Activated CD8-positive, alpha-beta memory T cell treated with anti-CD3 and anti-CD28 coated beads, Interleukin-2, amount 10 ng/mL, durations not matched to agents 7 days and 5 days (primary cell): ENCODE measurements at regions of chr18 and their contacts with region 1.

Region 1: GRCh38 chr18:12883684-12884405 is at the start of gene PTPN2:
- DNase-seq: peak; percentile 96
- ATAC-seq: peak; percentile 90
- H3K4me3 Mint-ChIP-seq: peak within 1 kb of the TSS; percentile 94
- H3K27ac Mint-ChIP-seq: peak within 1 kb of the TSS; percentile 92
- H3K4me1 Mint-ChIP-seq: peaks cover 51% of the 10 kb centered on the region
- H3K27me3 Mint-ChIP-seq: no peaks in the 10 kb centered on the region
- total RNA-seq, gene PTPN2: 65.4 to 82.7 TPM

Region 2: DNA sequence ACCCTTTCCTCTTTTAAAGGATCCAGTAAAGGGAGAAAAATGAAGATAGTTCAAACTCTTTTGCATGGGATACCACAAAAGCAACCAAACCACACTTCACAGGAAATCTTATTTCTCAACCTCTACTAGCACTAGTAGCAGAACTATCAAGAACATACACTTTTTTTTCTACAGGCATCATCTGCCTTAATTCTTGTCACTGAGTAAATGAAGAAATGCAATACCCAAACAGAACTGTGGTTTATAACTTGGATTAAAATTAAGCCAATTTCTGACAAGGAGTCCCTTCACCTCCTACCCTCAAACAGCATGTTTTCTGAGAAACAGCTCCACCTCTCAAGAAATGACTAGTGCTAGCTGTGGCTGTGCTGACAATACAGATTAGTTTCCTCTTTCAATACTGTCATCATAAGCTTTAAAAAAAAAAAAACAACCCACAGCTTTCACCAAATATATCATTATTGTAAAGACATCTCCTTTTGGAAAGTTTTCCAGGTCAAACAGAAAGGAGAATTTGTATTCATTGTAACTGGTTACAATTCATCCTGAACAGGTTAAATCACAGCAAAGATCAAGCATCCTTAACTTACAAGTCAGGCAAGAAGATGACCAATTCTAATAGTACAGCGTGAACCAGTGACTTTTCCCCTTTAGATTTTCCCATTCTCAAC is 44.2 kb before region 1 on chr18:
- CTCF ChIA-PET with region 1: interaction called, 11 read pairs
- DNase-seq: peak; percentile 81
- ATAC-seq: peak; percentile 88
- H3K4me3 Mint-ChIP-seq: peak overlapping the region; percentile 77
- H3K27ac Mint-ChIP-seq: peak overlapping the region; percentile 87
- H3K4me1 Mint-ChIP-seq: peaks cover 72% of the 10 kb centered on the region
- H3K27me3 Mint-ChIP-seq: no peaks in the 10 kb centered on the region

Region 3: GRCh38 chr18:13166023-13166422 is 282.2 kb after region 1 on chr18:
- CTCF ChIA-PET with region 1: no interaction called
- DNase-seq: no peak
- ATAC-seq: no peak
- H3K4me3 Mint-ChIP-seq: no peak overlapping the region
- H3K27ac Mint-ChIP-seq: no peak overlapping the region
- H3K4me1 Mint-ChIP-seq: no peaks in the 10 kb centered on the region
- H3K27me3 Mint-ChIP-seq: peaks cover 61% of the 10 kb centered on the region